MCF 10A (cell line): ENCODE measurements at regions of chr9 and their contacts with region 1.

Region 1: GRCh38 chr9:108967916-108968315 is 33.7 kb downstream of the ABITRAM start:
- DNase-seq: no peak
- H3K4me3 Mint-ChIP-seq: no peak overlapping the region
- H3K27ac Mint-ChIP-seq: no peak overlapping the region
- H3K4me1 Mint-ChIP-seq: no peaks in the 10 kb centered on the region
- H3K27me3 Mint-ChIP-seq: no peaks in the 10 kb centered on the region
- CTCF ChIP-seq: no peak

Region 2: DNA sequence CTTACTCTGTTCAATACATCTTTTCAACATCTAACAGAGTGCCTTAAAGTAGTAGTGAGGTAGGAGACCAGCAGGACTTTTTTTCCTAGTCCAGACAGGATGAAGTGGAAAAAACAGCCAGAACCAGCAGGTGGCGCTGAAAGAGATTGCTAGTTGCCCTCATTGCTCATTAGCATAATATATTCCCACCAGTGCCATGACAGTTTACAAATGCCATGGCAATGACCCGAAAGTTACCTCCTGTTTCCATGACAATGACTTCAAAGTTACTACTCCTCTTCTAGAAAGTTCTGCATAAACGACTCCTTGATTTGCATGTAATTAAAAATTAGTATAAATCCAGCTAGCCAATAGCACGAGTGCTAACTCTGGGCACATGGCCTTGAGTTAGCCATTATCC is 499.5 kb before region 1 on chr9:
- CTCF ChIA-PET with region 1: no interaction called
- POLR2A ChIA-PET with region 1: no interaction called
- intact Hi-C with region 1: no loop called
- DNase-seq: peak; percentile 78
- H3K4me3 Mint-ChIP-seq: no peak overlapping the region
- H3K27ac Mint-ChIP-seq: no peak overlapping the region
- H3K4me1 Mint-ChIP-seq: peaks cover 41% of the 10 kb centered on the region
- H3K27me3 Mint-ChIP-seq: no peaks in the 10 kb centered on the region
- CTCF ChIP-seq: peak; percentile 39

Region 3: GRCh38 chr9:108953983-108954574 is 13.8 kb before region 1 on chr9:
- CTCF ChIA-PET with region 1: interaction called, 18 read pairs
- POLR2A ChIA-PET with region 1: interaction called, 5 read pairs
- intact Hi-C with region 1: no loop called
- DNase-seq: peak; percentile 56
- H3K4me3 Mint-ChIP-seq: no peak overlapping the region
- H3K27ac Mint-ChIP-seq: no peak overlapping the region
- H3K4me1 Mint-ChIP-seq: no peaks in the 10 kb centered on the region
- H3K27me3 Mint-ChIP-seq: no peaks in the 10 kb centered on the region
- CTCF ChIP-seq: peak; percentile 52

Region 4: GRCh38 chr9:109316207-109316640 is 348.3 kb after region 1 on chr9:
- CTCF ChIA-PET with region 1: no interaction called
- POLR2A ChIA-PET with region 1: no interaction called
- intact Hi-C with region 1: no loop called
- DNase-seq: peak; percentile 99
- H3K4me3 Mint-ChIP-seq: peak overlapping the region; percentile 21
- H3K27ac Mint-ChIP-seq: peak overlapping the region; percentile 81
- H3K4me1 Mint-ChIP-seq: peaks cover 56% of the 10 kb centered on the region
- H3K27me3 Mint-ChIP-seq: no peaks in the 10 kb centered on the region
- CTCF ChIP-seq: no peak